Activated CD4-positive, alpha-beta T cell treated with anti-CD3 and anti-CD28 coated beads for 36 hours (primary cell): ENCODE measurements at regions of chr16 and their contacts with region 1.

Region 1: GRCh38 chr16:69166221-69166833 is 20.6 kb upstream of the SNTB2 start:
- DNase-seq: peak; percentile 91
- ATAC-seq: peak; percentile 92
- H3K4me3 Mint-ChIP-seq: peak overlapping the region; percentile 32
- H3K27ac Mint-ChIP-seq: peak overlapping the region; percentile 87
- H3K4me1 Mint-ChIP-seq: peaks cover 52% of the 10 kb centered on the region
- H3K27me3 Mint-ChIP-seq: no peaks in the 10 kb centered on the region

Region 2: DNA sequence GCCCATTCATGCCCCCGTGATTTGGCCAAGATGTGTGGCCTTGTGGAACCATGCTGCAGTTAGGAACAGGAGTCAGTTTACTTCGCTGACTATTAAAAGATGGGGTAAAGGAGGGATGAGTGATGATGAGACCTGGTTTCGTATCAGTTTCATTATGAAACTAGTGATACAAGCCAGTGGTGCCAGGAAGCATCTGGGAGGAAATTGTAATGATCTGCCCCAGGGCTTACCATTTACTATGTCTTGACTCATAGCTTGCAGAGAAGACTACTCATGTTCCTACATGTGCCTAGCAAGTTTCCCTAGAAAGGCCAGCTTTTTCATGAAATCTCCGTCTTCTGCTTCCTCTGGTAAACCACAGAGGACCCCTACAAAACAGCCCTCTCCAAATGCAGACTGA is 498.1 kb before region 1 on chr16:
- CTCF ChIA-PET with region 1: no interaction called
- POLR2A ChIA-PET with region 1: interaction called, 3 read pairs
- intact Hi-C with region 1: loop called in 1 of 2 experiments (anchors 1 kb)
- DNase-seq: peak; percentile 69
- ATAC-seq: peak; percentile 98
- H3K4me3 Mint-ChIP-seq: no peak overlapping the region
- H3K27ac Mint-ChIP-seq: peak overlapping the region; percentile 76
- H3K4me1 Mint-ChIP-seq: peaks cover 22% of the 10 kb centered on the region
- H3K27me3 Mint-ChIP-seq: peaks cover 5% of the 10 kb centered on the region

Region 3: GRCh38 chr16:69186642-69187445 is 20.5 kb after region 1 on chr16 and contains the start of gene SNTB2:
- CTCF ChIA-PET with region 1: interaction called, 10 read pairs
- POLR2A ChIA-PET with region 1: interaction called, 15 read pairs
- intact Hi-C with region 1: loop called (anchors 1 kb)
- DNase-seq: peak; percentile 91
- ATAC-seq: peak; percentile 83
- H3K4me3 Mint-ChIP-seq: peak within 1 kb of the TSS; percentile 83
- H3K27ac Mint-ChIP-seq: peak within 1 kb of the TSS; percentile 96
- H3K4me1 Mint-ChIP-seq: peaks cover 50% of the 10 kb centered on the region
- H3K27me3 Mint-ChIP-seq: no peaks in the 10 kb centered on the region
- total RNA-seq, gene SNTB2: 15.7 to 17.2 TPM

Region 4: DNA sequence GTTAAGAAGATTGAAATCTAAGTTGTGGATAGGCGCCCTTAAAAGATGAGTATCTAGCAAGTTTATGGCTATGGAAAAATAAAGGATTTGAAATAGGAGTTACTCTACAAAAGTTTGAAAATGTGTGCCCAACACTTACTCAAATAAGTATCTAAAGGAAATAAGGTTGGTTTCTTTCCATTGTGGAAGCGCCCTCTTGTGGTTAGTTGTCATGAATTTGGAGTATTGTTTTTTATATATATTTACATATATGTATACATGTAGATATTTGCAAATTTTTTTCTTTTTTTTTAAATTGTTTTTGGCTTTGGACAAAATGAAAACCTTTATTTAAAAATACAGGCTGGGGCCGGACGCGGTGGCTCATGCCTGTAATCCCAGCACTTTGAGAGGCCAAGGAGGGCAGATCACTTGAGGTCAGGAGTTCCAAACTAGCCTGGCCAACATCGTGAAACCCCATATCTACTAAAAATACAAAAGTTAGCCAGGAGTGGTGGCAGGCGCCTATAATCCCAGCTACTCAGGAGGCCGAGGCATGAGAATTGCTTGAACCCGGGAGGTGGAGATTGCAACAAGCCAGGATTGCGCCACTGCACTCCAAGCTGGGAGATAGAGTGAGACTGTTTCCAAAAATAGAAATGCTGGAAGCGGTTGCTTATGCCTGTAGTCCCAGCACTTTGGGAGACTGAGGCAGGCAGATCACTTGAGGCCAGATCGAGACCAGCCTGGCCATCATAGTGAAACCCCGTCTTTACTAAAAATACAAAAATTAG is 120.8 kb after region 1 on chr16:
- CTCF ChIA-PET with region 1: interaction called, 7 read pairs
- POLR2A ChIA-PET with region 1: interaction called, 4 read pairs
- intact Hi-C with region 1: loop called (anchors 1 to 5 kb)
- DNase-seq: peak; percentile 51
- ATAC-seq: peak; percentile 36
- H3K4me3 Mint-ChIP-seq: no peak overlapping the region
- H3K27ac Mint-ChIP-seq: no peak overlapping the region
- H3K4me1 Mint-ChIP-seq: peaks cover 3% of the 10 kb centered on the region
- H3K27me3 Mint-ChIP-seq: no peaks in the 10 kb centered on the region